Dendritic cell treated with granulocyte-macrophage colony-stimulating factor and Interleukin-4, amounts not matched to agents 40 ng/mL and 50 ng/mL, for 4 days (primary cell): ENCODE measurements at regions of chr21 and their contacts with region 1.

Region 1: GRCh38 chr21:28938726-28939125 is 54.0 kb downstream of the LTN1 start:
- H3K4me3 Mint-ChIP-seq: no peak overlapping the region
- H3K27ac Mint-ChIP-seq: no peak overlapping the region
- H3K4me1 Mint-ChIP-seq: peaks cover 13% of the 10 kb centered on the region
- H3K27me3 Mint-ChIP-seq: no peaks in the 10 kb centered on the region

Region 2: DNA sequence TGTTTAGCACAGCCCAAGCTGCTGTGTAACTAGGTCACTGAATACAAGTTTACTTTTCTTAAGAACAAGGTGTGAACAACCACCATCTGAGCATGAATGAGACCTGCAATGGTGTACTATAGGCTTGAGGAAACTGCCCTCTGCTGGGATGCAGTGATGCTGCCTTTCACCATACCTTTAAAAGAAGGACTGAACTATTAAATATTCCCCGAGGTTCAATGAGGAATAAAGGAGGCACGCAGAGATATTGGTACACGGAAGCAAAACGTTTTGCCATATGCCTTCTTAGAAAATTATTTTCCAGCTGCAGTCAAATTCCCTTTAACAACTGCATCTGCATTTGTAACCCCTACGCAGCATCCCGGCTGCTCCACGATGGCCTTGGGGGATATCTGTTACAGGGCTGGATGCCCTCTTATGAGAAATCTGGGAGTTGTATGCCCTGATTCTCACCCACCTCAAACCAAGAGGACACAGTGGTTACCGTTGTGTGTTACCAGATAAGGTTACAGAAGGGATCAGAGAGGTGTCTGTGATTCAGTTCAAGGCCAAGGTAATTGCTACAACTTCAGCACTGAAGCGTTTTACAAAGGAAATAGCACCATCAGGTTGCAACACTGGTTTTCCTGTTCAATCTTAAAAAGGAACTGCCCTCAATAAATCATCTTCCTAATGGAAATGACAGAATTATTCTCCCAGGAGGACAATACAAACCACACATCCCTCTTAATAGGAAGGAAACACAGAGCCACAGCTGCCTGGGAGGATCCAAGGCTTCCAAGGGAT is 416.5 kb before region 1 on chr21:
- intact Hi-C with region 1: loop called (anchors 5 kb)
- H3K4me3 Mint-ChIP-seq: no peak overlapping the region
- H3K27ac Mint-ChIP-seq: no peak overlapping the region
- H3K4me1 Mint-ChIP-seq: no peaks in the 10 kb centered on the region
- H3K27me3 Mint-ChIP-seq: no peaks in the 10 kb centered on the region

Region 3: GRCh38 chr21:28856588-28857250 is 82.0 kb before region 1 on chr21:
- intact Hi-C with region 1: no loop called
- H3K4me3 Mint-ChIP-seq: no peak overlapping the region
- H3K27ac Mint-ChIP-seq: no peak overlapping the region
- H3K4me1 Mint-ChIP-seq: no peaks in the 10 kb centered on the region
- H3K27me3 Mint-ChIP-seq: no peaks in the 10 kb centered on the region

Region 4: GRCh38 chr21:29073222-29074006 is 134.7 kb after region 1 on chr21 and contains the start of gene CCT8:
- intact Hi-C with region 1: no loop called
- H3K4me3 Mint-ChIP-seq: peak within 1 kb of the TSS; percentile 97
- H3K27ac Mint-ChIP-seq: peak within 1 kb of the TSS; percentile 95
- H3K4me1 Mint-ChIP-seq: peaks cover 34% of the 10 kb centered on the region
- H3K27me3 Mint-ChIP-seq: no peaks in the 10 kb centered on the region

Region 5: GRCh38 chr21:30297476-30297875 is 1358.8 kb after region 1 on chr21:
- intact Hi-C with region 1: no loop called
- H3K4me3 Mint-ChIP-seq: no peak overlapping the region
- H3K27ac Mint-ChIP-seq: no peak overlapping the region
- H3K4me1 Mint-ChIP-seq: no peaks in the 10 kb centered on the region
- H3K27me3 Mint-ChIP-seq: no peaks in the 10 kb centered on the region